AG04449 (cell line): ENCODE measurements at regions of chr2 and their contacts with region 1.

Region 1: DNA sequence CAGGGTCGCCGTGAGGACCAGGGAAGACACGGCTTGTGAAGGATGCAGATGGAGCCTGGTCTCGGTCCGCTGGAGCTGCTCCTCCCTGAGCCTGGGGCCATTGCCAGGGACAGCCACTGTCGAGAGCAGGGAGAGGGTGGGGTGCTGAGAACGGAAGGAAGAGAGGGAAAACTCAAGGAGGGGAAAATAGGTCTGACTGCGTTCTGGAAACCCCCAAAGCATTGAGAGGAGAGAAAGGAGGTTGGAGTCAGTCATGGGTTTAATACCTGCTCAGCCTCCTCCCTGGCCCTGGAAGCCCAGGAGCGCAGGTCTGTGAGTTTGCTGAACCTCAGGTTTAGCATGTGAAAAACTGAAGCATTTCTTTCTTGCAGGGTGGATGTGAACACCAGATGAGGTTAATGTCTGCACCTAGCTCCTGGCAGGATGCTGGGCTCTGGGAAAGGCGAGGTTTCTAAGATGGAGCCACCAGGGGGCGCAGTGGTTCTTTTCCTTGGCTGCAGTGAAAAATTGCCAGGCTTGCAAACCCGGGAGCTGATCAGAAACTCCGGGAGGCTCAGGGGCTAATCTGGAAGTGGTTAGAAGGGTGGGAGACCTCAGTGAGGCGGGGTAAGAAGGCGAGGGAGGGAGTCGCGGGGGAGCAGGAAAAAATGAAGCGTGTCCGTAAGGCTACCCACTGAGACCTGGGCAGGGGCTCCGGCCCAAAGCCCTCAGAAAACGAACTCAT is 33.6 kb upstream of the RNF149 start:
- DNase-seq: no peak
- H3K4me3 ChIP-seq: peak overlapping the region; percentile 39
- CTCF ChIP-seq: peak; percentile 81

Region 2: GRCh38 chr2:101328474-101329007 is 13.5 kb before region 1 on chr2:
- CTCF ChIA-PET with region 1: interaction called, 57 read pairs
- POLR2A ChIA-PET with region 1: no interaction called
- DNase-seq: no peak
- H3K4me3 ChIP-seq: no peak overlapping the region
- CTCF ChIP-seq: no peak

Region 3: DNA sequence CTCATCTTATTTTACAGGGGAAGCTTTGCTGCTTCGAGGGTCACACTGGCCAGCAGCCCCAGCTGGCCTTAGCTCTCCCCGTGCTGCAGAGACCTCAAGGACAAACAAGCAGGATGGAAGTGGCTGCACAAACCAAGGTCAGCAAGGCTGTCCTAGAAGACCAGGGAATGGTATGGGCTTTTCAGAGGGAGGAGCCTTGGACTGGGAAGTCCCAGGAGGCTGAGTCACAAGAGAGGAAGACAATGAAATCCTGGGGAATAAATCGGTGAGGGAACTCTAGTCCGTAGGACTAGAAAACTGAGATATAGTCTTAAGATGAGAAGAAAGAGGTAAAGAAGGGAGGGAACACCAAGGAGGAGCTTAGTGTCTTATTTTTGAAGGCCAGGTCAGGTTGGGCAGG is 29.6 kb after region 1 on chr2:
- CTCF ChIA-PET with region 1: interaction called, 11 read pairs
- POLR2A ChIA-PET with region 1: no interaction called
- DNase-seq: no peak
- H3K4me3 ChIP-seq: no peak overlapping the region
- CTCF ChIP-seq: no peak

Region 4: GRCh38 chr2:101396316-101396717 is 54.3 kb after region 1 on chr2:
- CTCF ChIA-PET with region 1: interaction called, 19 read pairs
- POLR2A ChIA-PET with region 1: no interaction called
- DNase-seq: peak; percentile 87
- H3K4me3 ChIP-seq: no peak overlapping the region
- CTCF ChIP-seq: no peak

Region 5: GRCh38 chr2:101419096-101419663 is 77.1 kb after region 1 on chr2:
- CTCF ChIA-PET with region 1: interaction called, 53 read pairs
- POLR2A ChIA-PET with region 1: no interaction called
- DNase-seq: no peak
- H3K4me3 ChIP-seq: no peak overlapping the region
- CTCF ChIP-seq: peak; percentile 52

Region 6: DNA sequence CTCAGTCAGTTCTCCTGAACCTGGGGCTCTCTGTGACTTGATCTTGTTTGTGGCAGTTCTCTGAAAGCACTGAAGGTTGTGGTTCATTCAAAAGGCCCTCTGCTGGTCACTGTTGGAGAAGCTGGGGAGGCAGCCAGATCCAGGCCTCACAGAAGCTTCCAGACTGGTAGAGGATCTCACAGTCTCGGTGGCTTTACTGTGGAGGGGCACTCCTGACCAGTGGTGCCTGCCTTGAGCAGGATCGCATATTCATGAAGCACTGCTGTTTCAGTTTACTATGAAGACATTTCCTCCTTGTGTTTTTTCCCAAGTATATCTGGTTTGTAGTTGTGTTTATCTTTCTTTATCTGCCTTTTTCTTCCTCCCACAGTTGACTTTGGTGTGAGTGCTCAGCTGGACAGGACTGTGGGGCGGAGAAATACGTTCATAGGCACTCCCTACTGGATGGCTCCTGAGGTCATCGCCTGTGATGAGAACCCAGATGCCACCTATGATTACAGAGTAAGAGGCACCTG is 489.3 kb after region 1 on chr2:
- CTCF ChIA-PET with region 1: interaction called, 12 read pairs
- POLR2A ChIA-PET with region 1: no interaction called
- DNase-seq: no peak
- H3K4me3 ChIP-seq: no peak overlapping the region
- CTCF ChIP-seq: peak; percentile 84